Activated naive CD4-positive, alpha-beta T cell treated with anti-CD3 and anti-CD28 coated beads for 36 hours (primary cell): ENCODE measurements at regions of chr10 and their contacts with region 1.

Region 1: DNA sequence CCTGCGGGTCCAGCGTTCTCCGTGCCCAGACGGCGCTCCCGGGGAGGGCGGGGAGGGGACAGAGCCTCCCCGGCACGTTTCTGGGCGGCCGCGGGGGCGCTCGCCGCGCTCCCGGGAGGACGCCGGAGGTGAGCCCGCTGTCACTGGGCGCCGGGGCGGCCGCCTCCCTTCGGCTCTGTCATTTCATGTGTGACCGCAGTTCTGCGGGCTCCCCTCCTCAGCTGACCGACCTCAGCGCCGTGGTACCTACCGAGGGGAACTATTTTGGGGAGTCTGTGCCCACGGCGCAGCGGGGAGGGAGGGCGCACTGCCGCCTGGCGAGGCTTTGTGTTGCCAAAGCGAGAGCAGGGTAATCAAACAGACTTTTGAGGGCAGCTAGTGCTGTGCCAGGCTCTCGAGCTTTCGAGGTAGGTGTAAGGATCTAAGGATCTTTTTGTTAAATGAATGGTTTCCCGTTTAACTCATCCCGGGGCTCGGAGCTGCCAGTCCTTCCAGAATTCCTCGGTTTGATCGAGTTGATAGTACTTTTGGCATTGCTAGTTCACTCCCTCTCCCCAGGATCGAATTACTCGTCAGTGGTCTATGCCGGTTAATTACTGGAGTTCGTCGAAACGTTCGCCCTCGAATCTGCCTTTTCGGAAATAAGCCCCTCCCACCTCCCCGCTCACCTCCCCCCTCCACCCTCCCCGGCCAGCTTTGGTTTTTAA is 1.9 kb downstream of the ARID5B start:
- DNase-seq: peak; percentile 74
- H3K4me3 Mint-ChIP-seq: peak overlapping the region; percentile 99
- H3K27ac Mint-ChIP-seq: peak overlapping the region; percentile 100
- H3K4me1 Mint-ChIP-seq: peaks cover 42% of the 10 kb centered on the region
- H3K27me3 Mint-ChIP-seq: no peaks in the 10 kb centered on the region

Region 2: DNA sequence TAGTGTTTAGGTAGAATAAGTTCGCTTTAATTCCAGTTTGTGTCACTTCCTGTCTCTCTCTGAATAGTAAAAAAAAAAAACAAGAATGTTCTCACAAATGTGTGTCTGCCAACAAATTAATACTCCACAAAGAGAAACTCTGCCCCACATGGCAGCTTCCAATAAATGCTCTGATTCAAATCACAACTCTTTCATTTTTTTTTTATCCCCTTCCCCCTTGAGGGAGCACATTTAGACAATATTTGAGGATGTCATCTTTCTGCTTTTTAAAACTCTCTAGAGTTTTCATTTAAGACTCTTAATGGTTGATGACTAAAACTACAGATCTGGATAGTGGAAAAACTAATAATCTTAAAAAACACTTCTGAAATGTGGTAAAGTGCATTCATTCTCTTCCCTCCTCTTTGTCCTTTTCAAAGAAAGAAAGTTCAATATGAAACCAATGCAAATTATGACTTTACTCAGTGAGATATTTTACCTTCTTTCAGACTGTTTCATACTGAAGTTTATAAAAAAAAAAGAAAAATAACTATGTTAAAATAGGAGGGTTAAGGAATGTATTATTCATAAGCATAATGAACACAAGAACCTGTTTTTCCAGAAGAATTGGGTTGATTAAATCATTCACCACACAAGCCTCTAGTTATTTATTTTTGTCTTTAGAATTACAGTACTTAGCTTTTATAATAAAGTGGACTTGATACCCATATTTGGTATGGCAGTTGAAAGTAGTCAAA is 40.5 kb after region 1 on chr10:
- CTCF ChIA-PET with region 1: interaction called, 33 read pairs
- intact Hi-C with region 1: loop called (anchors 1 kb)
- DNase-seq: peak; percentile 47
- H3K4me3 Mint-ChIP-seq: peak overlapping the region; percentile 62
- H3K27ac Mint-ChIP-seq: peak overlapping the region; percentile 98
- H3K4me1 Mint-ChIP-seq: peaks cover 71% of the 10 kb centered on the region
- H3K27me3 Mint-ChIP-seq: no peaks in the 10 kb centered on the region

Region 3: DNA sequence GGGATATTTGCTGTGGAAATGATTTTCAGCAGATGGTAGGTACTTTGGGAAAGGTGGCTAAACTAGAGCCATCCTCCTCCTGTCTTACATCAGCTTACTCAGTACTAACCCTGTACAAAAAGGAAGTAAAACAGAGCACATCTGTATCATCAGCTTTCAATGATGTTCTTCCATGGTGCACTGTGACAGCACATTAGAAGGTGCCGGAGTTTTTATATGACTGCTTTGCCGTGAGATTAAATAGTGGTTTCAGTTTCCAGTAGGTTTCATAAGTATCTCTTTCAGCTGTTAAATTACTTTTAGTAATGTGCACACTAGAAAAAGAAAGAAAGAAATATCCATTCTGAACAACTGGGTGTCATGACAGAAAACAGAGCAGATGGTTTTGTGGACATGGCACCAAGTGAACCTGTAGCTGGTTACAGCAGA is 84.6 kb after region 1 on chr10:
- CTCF ChIA-PET with region 1: interaction called, 8 read pairs
- intact Hi-C with region 1: loop called (anchors 1 kb)
- DNase-seq: peak; percentile 64
- H3K4me3 Mint-ChIP-seq: peak overlapping the region; percentile 51
- H3K27ac Mint-ChIP-seq: peak overlapping the region; percentile 96
- H3K4me1 Mint-ChIP-seq: peaks cover 89% of the 10 kb centered on the region
- H3K27me3 Mint-ChIP-seq: no peaks in the 10 kb centered on the region

Region 4: DNA sequence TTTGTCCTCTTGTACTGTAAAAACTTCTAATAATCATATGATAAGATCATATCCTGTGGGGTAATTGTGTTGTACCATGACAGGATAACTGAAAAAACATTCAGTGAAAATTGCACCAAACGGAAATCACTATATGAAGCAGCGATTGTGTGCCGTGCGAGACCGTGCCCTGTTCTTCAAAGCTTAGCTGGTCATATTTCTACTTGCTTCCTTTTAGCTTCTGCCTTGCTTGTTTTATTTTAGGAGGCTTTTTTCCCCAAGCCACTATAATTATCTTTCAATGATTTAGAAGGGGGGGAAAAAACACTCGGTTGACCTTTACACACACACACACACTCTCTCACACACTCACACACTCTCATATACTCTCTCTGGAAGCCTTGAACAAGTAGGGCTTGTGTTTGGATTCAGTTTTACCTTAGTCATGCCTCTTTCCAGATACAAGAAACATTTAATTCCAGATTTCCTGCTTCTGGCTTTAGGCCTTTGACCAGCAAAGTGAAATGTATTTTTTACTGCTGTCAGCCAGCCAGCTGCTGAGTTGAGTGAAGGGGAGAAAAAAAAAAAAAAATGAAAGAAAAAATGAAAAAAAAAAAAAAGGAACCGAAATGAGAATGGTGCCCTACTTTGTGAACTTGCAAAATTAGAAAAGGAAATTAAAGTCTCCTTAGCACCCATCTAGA is 179.5 kb after region 1 on chr10:
- CTCF ChIA-PET with region 1: no interaction called
- intact Hi-C with region 1: loop called (anchors 1 kb)
- DNase-seq: peak; percentile 80
- H3K4me3 Mint-ChIP-seq: peak overlapping the region; percentile 41
- H3K27ac Mint-ChIP-seq: peak overlapping the region; percentile 89
- H3K4me1 Mint-ChIP-seq: peaks cover 86% of the 10 kb centered on the region
- H3K27me3 Mint-ChIP-seq: no peaks in the 10 kb centered on the region